Ovary (tissue), 10 donors: ENCODE measurements at regions of chr9 and their contacts with region 1.

Region 1: GRCh38 chr9:114691046-114691955 is 9.3 kb upstream of the TEX48 start:
- DNase-seq: no peak
- H3K4me3 ChIP-seq: no peak overlapping the region
- H3K27ac ChIP-seq: no peak overlapping the region
- H3K4me1 ChIP-seq: no peaks in the 10 kb centered on the region
- H3K27me3 ChIP-seq: no peaks in the 10 kb centered on the region
- CTCF ChIP-seq: no peak
- EP300 ChIP-seq: no peak
- POLR2A ChIP-seq: no peak

Region 2: GRCh38 chr9:114616653-114617520 is 74.4 kb before region 1 on chr9:
- intact Hi-C with region 1: no loop called
- DNase-seq: peak; percentile 32 to 57 (median 49)
- H3K4me3 ChIP-seq: no peak overlapping the region
- H3K27ac ChIP-seq: peak overlapping the region in 1 of 2 donors; percentile 40
- H3K4me1 ChIP-seq: peaks cover 18% of the 10 kb centered on the region
- H3K27me3 ChIP-seq: no peaks in the 10 kb centered on the region
- CTCF ChIP-seq: no peak
- EP300 ChIP-seq: no peak
- POLR2A ChIP-seq: no peak

Region 3: DNA sequence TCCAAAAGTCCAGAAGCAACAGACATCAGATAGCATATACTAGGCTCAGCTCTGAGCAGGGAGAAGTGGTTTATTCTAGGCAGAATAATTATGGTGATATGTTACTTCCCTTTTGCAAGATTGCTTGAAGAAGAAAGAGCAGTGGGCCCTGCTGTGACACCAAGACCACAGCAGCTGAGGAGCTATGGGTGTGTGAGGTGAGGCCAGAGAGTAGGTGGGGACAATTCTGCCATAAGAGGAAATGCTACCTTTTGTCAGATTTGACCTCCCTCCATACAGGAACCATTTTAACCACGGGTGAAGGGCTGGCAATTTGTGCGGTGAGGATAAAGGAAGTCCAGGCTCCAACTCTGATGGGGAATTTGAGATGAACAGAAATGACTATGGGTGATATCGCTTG is 63.3 kb after region 1 on chr9:
- intact Hi-C with region 1: loop called in 1 of 4 experiments (anchors 10 kb)
- DNase-seq: no peak
- H3K4me3 ChIP-seq: no peak overlapping the region
- H3K27ac ChIP-seq: no peak overlapping the region
- H3K4me1 ChIP-seq: no peaks in the 10 kb centered on the region
- H3K27me3 ChIP-seq: no peaks in the 10 kb centered on the region
- CTCF ChIP-seq: no peak
- EP300 ChIP-seq: no peak
- POLR2A ChIP-seq: no peak

Region 4: GRCh38 chr9:115198001-115198400 is 506.7 kb after region 1 on chr9:
- intact Hi-C with region 1: no loop called
- DNase-seq: no peak
- H3K4me3 ChIP-seq: no peak overlapping the region
- H3K27ac ChIP-seq: no peak overlapping the region
- H3K4me1 ChIP-seq: no peaks in the 10 kb centered on the region
- H3K27me3 ChIP-seq: no peaks in the 10 kb centered on the region
- CTCF ChIP-seq: no peak
- EP300 ChIP-seq: no peak
- POLR2A ChIP-seq: no peak